Sigmoid colon (tissue), 7 donors: ENCODE measurements at regions of chr21 and their contacts with region 1.

Region 1: DNA sequence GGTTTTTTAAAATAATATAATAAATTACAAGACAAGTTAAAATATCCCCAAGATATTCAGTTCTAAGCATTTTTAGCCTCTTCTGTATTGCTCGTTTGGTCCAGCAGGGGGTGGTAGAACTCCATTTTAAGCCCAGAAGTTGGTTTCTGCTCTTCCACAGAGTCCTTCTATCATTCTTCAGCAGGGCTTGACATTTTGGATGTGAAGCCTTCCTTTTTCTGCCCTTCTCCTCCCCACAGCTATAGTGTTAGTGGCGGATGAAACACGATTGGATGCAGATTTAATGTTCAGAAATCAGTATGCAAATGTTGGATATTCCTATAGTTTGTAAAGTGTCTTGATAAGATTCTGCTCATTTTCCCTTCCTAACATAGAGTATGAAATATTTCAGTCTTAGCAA is 1.4 kb downstream of the NCAM2 start:
- DNase-seq: no peak
- H3K4me3 ChIP-seq: peak overlapping the region in 1 of 4 donors; percentile 61
- H3K27ac ChIP-seq: no peak overlapping the region
- H3K4me1 ChIP-seq: peaks cover 0 to 19% (median 10%) of the 10 kb centered on the region in 4 donors
- H3K27me3 ChIP-seq: no peaks in the 10 kb centered on the region
- CTCF ChIP-seq: peak; percentile 60 to 77 (median 61)
- EP300 ChIP-seq: no peak
- POLR2A ChIP-seq: no peak

Region 2: DNA sequence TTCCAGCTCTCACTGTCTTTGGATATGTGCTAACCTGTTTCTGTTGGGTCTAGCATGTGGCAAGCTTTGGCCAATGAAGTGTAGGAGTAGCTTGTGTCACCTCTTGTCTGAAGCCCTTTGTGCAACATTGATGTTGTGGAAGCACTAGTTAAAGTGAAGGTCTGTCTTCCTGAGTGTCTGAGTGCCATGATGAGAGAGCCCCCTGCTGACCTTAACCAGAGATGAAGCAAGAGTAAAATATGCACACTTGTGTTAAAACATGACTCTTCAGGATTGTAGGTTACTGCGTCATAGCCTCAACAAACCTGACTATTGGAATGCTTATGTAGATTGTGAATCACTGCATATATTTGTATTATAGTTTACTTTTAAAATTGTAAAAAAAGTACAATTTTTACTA is 102.3 kb after region 1 on chr21:
- intact Hi-C with region 1: loop called (anchors 5 kb)
- DNase-seq: no peak
- H3K4me3 ChIP-seq: no peak overlapping the region
- H3K27ac ChIP-seq: no peak overlapping the region
- H3K4me1 ChIP-seq: no peaks in the 10 kb centered on the region
- H3K27me3 ChIP-seq: no peaks in the 10 kb centered on the region
- CTCF ChIP-seq: no peak
- EP300 ChIP-seq: no peak
- POLR2A ChIP-seq: no peak

Region 3: DNA sequence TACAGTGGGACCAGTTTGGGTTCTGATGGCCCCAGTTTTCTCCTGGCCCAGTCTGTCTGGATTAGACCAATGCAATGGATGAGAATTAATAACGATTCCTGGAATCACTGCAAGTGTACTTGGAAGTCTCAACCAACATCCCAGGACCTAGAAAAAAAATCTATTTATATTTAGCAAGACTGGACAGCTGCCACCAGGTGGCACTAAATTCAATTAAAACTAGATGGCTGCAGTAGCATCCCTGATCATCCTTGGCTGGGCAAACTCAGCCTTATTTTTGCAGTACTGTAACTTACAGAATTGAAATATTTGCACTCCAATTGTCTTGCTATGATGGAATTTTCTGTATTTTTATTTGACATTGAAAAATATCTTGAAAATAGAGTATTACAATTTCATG is 164.2 kb after region 1 on chr21:
- intact Hi-C with region 1: loop called (anchors 10 kb)
- DNase-seq: peak; percentile 70
- H3K4me3 ChIP-seq: no peak overlapping the region
- H3K27ac ChIP-seq: no peak overlapping the region
- H3K4me1 ChIP-seq: peaks cover 0 to 22% (median 18%) of the 10 kb centered on the region in 4 donors
- H3K27me3 ChIP-seq: no peaks in the 10 kb centered on the region
- CTCF ChIP-seq: peak; percentile 12 to 58 (median 39)
- EP300 ChIP-seq: no peak
- POLR2A ChIP-seq: no peak

Region 4: GRCh38 chr21:21373969-21374368 is 374.3 kb after region 1 on chr21:
- intact Hi-C with region 1: loop called (anchors 10 kb)
- DNase-seq: no peak
- H3K4me3 ChIP-seq: no peak overlapping the region
- H3K27ac ChIP-seq: no peak overlapping the region
- H3K4me1 ChIP-seq: no peaks in the 10 kb centered on the region
- H3K27me3 ChIP-seq: no peaks in the 10 kb centered on the region
- CTCF ChIP-seq: peak in 1 of 4 experiments; percentile 11
- EP300 ChIP-seq: no peak
- POLR2A ChIP-seq: no peak

Region 5: GRCh38 chr21:21751286-21751685 is 751.6 kb after region 1 on chr21:
- intact Hi-C with region 1: loop called (anchors 2 kb)
- DNase-seq: no peak
- H3K4me3 ChIP-seq: no peak overlapping the region
- H3K27ac ChIP-seq: no peak overlapping the region
- H3K4me1 ChIP-seq: no peaks in the 10 kb centered on the region
- H3K27me3 ChIP-seq: no peaks in the 10 kb centered on the region
- CTCF ChIP-seq: no peak
- EP300 ChIP-seq: no peak
- POLR2A ChIP-seq: no peak

Region 6: GRCh38 chr21:22791986-22792560 is 1792.4 kb after region 1 on chr21:
- intact Hi-C with region 1: loop called (anchors 10 kb)
- DNase-seq: no peak
- H3K4me3 ChIP-seq: no peak overlapping the region
- H3K27ac ChIP-seq: no peak overlapping the region
- H3K4me1 ChIP-seq: no peaks in the 10 kb centered on the region
- H3K27me3 ChIP-seq: no peaks in the 10 kb centered on the region
- CTCF ChIP-seq: peak in 3 of 4 experiments; percentile 35 to 70 (median 44)
- EP300 ChIP-seq: no peak
- POLR2A ChIP-seq: no peak